ENCODE measurements at regions of chr15 and their contacts with region 1.

Region 1: DNA sequence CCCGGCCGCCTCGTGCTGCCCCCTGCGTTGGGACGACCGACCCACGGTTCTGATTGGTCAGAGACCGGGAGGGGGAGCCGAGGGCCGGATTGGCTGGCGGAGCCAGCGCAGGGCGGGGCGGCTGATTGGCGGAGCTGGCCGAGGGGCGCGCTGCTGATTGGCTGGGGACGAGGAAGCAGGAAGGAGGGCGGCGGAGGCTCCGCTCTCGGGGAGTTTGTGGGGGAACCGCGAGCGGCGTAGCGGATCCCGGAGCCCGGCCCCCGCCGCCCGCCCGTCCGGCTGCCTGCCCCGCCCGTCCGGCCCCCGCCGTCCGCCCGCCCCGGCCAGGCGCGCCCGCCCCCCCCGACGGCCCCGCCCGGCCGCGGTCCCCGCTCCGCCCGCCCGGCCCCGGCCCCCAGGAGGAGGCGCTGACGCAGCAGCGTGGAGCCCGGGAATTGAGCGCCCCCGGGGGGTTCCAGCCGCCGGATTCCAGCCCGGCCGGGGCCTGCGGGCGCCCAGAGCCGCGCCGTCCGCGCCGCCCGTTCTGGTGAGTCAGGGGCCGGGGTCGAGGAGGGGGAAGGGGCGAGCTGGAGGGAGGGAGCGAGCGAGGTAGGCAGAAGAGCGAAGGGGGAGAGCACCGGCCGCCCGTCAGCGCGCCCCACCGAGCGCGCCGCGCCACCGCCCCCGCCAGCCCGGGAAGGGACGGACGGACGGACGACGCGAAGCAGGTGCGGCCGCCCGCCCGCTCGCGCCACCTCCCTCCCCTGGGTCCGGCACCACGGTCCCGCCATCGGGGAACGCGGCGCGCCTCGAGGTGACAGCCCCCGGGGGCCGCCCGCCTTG is at the start of gene BAHD1:
- DNase-seq: peak; percentile 96
- H3K4me3 Mint-ChIP-seq: peak within 1 kb of the TSS; percentile 95
- H3K27ac Mint-ChIP-seq: peak within 1 kb of the TSS; percentile 87
- H3K4me1 Mint-ChIP-seq: peaks cover 26% of the 10 kb centered on the region
- H3K27me3 Mint-ChIP-seq: peaks cover 53% of the 10 kb centered on the region
- total RNA-seq, gene BAHD1: 26.5 and 26.9 TPM in 2 replicates

Region 2: GRCh38 chr15:40160689-40161688 is 280.0 kb before region 1 on chr15 and contains the start of gene BUB1B:
- intact Hi-C with region 1: loop called (anchors 2 kb)
- DNase-seq: peak; percentile 93
- H3K4me3 Mint-ChIP-seq: no peak within 1 kb of the TSS
- H3K27ac Mint-ChIP-seq: no peak within 1 kb of the TSS
- H3K4me1 Mint-ChIP-seq: peaks cover 10% of the 10 kb centered on the region
- H3K27me3 Mint-ChIP-seq: no peaks in the 10 kb centered on the region
- total RNA-seq, gene BUB1B: 71.0 and 76.1 TPM in 2 replicates

Region 3: DNA sequence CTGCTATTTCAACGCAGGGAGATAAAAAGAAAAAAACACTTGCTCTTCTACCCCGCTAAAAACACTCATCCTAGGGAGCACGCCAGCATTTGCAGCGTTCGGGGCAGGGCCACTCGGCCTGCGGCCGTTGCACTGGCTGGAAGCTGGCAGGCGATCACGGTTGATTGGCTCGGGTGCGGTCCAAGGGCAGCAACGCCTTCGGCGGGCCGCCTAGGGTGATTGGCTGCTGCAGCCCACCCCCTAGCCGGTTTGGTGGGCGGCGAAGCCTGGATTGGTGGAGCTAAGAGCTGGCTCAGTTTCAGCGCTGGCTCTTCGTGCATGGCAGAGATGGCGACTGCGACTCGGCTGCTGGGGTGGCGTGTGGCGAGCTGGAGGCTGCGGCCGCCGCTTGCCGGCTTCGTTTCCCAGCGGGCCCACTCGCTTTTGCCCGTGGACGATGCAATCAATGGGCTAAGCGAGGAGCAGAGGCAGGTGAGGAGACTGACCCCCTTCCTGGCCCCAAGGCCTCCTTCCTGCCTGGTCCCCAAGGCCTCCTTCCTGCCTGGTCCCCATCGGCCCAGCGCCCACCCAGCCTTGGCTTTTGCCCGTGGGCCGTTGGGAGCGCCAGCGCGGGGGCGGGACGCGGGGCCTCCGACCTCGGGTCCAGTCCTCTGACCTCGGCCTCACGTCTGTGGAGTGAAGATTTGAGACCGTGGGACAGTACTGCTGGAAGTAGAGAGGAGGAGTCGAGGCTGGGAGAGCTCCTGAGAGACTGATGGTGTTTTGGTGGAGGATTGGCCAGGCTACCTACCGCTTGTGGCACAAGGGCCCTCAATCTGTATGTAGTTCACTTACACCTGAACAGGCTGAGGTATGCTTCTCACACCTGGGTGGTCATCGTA is 35.2 kb before region 1 on chr15 and contains the start of gene IVD:
- intact Hi-C with region 1: loop called (anchors 2 kb)
- DNase-seq: peak; percentile 77
- H3K4me3 Mint-ChIP-seq: peak within 1 kb of the TSS; percentile 88
- H3K27ac Mint-ChIP-seq: peak within 1 kb of the TSS; percentile 87
- H3K4me1 Mint-ChIP-seq: peaks cover 37% of the 10 kb centered on the region
- H3K27me3 Mint-ChIP-seq: no peaks in the 10 kb centered on the region
- total RNA-seq, gene IVD: 59.6 and 65.2 TPM in 2 replicates

Region 4: GRCh38 chr15:40470423-40471104 is 29.6 kb after region 1 on chr15 and contains the start of gene CHST14:
- intact Hi-C with region 1: loop called (anchors 1 kb)
- DNase-seq: peak; percentile 56
- H3K4me3 Mint-ChIP-seq: peak within 1 kb of the TSS; percentile 89
- H3K27ac Mint-ChIP-seq: peak within 1 kb of the TSS; percentile 79
- H3K4me1 Mint-ChIP-seq: peaks cover 25% of the 10 kb centered on the region
- H3K27me3 Mint-ChIP-seq: peaks cover 3% of the 10 kb centered on the region
- total RNA-seq, gene CHST14: 9.7 and 10.2 TPM in 2 replicates

Region 5: GRCh38 chr15:40506964-40507571 is 66.1 kb after region 1 on chr15:
- intact Hi-C with region 1: loop called (anchors 1 kb)
- DNase-seq: peak; percentile 55
- H3K4me3 Mint-ChIP-seq: peak overlapping the region; percentile 17
- H3K27ac Mint-ChIP-seq: no peak overlapping the region
- H3K4me1 Mint-ChIP-seq: peaks cover 29% of the 10 kb centered on the region
- H3K27me3 Mint-ChIP-seq: peaks cover 69% of the 10 kb centered on the region

Region 6: DNA sequence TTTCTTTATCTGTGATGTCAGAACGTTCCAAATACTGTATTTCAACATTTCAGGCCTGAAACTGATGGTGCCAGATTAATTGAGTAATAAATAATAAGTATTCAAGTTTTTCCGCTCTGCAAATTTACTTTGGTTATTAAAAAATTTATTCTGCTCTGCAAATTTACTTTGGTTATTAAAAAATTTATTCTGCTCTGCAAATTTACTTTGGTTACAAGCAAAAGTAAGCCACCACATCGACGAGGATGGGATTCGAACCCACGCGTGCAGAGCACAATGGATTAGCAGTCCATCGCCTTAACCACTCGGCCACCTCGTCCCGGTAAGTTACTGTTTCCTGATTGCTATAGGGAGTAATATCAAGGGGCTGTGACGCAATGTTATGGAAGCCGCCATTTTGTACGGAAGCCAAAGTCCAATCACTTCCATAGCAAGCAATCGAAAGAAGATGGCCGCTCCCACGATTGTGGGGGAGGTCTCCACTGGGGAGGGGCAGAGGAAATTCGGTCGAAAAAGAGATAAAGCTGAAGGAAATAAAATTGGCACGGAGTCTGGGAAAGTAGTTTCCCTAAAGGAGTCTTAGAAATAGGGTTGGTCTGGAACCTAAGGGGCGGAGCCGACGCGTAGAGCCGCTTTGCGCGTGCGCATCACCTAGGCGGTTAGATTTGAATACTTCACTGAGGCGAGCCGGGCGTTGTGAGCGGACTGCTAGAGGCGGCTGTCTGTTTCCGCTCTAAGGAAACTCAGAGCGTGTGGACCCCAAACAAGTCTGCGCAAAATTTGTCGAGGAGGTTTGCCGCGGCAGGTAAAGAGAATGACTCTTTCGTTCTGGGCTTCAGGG is 152.9 kb after region 1 on chr15 and contains the start of gene KNL1:
- intact Hi-C with region 1: loop called (anchors 5 kb)
- DNase-seq: peak; percentile 88
- H3K4me3 Mint-ChIP-seq: peak within 1 kb of the TSS; percentile 93
- H3K27ac Mint-ChIP-seq: peak within 1 kb of the TSS; percentile 98
- H3K4me1 Mint-ChIP-seq: peaks cover 45% of the 10 kb centered on the region
- H3K27me3 Mint-ChIP-seq: peaks cover 2% of the 10 kb centered on the region
- total RNA-seq, gene KNL1: 21.6 and 22.4 TPM in 2 replicates

Region 7: GRCh38 chr15:41416742-41417406 is 975.9 kb after region 1 on chr15 and contains the start of gene RTF1:
- intact Hi-C with region 1: no loop called
- DNase-seq: peak; percentile 98
- H3K4me3 Mint-ChIP-seq: peak within 1 kb of the TSS; percentile 93
- H3K27ac Mint-ChIP-seq: peak within 1 kb of the TSS; percentile 96
- H3K4me1 Mint-ChIP-seq: peaks cover 40% of the 10 kb centered on the region
- H3K27me3 Mint-ChIP-seq: no peaks in the 10 kb centered on the region
- total RNA-seq, gene RTF1: 41.0 and 44.7 TPM in 2 replicates

Measured in activated T-helper 1 cell treated with anti-CD3 and anti-CD28 coated beads, Interleukin-12 subunit alpha, Interleukin-12 subunit beta, Interleukin-2, Interleukin-4 antibody, amounts not matched to agents 30 ng/mL and 10 ng/mL and 1 ng/mL, durations not matched to agents 14 hours and 24 hours and 36 hours (primary cell).